Posterior vena cava (tissue), 2 donors: ENCODE measurements at regions of chr2 and their contacts with region 1.

Region 1: DNA sequence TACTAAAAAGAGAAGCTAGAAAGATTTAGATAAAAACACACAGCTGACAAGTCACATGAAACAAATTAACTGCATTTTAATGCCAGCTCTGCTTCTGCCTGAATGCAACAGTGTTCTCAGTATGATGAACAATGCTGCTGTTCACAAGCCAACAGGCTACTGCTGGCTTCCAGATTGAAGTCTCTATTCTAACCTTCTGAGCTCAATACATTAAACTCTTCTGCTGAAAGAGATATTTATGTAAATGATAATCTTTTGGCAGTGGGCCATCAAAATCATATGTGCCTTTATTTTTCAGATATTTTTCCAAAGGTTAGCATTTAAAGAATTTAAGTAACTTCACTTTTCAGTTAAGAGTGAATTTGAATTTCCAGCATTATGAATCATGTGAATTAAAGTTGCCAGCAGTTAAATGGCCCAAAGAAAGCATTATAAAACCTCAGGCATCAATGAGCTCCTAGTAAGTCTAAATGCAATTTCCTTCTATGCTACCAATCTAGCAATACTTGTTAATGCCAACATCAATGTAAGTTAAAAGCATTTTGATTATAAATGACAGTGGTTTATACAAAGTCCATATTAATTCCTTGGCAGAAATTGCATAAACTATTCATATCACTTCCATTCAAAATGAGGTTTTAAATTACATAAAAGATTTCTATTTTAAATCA is 72.4 kb downstream of the ID2 start:
- DNase-seq: no peak

Region 2: DNA sequence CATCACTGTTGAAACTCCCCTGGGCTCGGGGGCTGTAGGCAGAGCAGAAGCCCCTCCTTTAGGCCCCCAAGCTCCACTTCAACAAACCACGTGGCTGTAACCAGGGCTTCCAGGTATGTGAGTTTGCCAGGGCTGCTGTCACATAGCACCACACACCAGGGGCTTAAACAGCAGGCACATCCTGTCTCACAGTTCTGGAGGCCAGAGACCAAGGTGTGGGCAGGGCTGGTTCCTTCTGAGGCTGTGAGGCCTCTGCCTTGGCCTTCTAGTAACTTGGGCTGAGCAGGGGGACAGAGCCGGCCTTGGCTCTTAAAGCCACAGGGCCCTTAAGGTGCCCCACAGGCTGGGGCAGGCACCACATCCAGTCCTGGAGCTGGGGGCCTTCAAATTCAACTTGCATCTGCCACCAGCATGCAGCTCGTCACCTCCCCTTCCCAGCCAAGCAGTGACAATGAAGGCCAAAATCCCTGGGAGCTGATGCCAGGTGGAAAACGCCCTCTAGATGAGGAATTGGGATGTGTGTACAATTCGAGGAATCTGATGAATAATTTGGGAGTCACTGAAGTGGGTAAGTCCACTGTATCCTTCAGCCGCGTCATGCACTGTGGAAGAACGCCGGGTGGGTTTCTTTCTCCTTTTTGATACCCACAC is 1798.1 kb after region 1 on chr2:
- intact Hi-C with region 1: loop called in 1 of 2 experiments (anchors 10 kb)
- DNase-seq: no peak